ENCODE measurements at regions of chr6 and their contacts with region 1.

Region 1: DNA sequence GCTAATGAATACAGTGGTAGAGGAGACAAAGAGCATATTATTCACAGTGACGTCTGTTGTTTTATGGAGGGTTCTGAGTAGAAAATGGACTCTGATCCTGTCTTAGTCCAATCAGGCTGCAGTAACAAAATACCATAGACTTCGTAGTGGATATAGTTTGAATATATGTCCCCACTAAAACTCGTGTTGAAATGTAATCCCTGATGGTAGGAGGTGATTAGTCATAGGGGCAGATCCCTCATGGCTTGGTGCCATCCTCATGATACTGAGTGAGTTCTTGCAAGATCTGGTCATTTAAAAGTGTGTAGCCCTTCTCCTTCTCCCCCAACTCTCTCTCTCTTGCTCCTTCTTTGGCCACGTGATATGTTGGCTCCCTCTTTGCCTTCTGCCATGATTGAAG is 82.5 kb downstream of the CD83 start:
- DNase-seq: no peak
- H3K4me3 ChIP-seq: no peak overlapping the region
- H3K27ac ChIP-seq: no peak overlapping the region
- H3K4me1 ChIP-seq: no peaks in the 10 kb centered on the region
- CTCF ChIP-seq: no peak

Region 2: DNA sequence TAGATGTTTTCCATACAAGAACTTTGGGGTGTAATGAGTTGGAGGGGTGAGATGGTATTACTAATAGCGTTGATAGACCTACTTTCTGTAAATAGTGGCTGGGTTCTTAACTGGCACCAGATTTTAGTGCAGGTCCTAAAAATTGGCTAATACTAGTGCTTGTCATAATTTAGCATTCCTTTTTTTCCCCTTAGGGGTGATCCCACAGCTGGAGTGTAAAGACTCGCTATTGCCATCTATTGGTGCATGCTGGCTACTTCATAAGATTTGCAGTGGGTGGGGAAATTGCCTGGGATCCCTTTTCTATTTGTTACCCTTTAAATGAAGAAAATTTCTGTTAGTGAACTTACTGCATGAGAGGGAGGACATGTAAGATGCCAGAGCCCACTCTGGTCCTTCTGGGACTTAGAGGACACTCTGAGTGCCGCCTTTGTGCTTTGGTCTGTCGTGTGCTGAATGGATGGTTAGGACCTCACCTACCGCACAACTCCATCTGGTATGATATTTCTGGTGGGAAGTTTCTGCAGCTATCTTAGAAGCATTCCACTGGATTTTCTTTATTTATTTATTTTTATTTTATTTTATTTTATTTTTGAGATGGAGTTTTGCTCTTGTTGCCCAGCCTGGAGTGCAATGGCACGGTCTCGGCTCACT is 1241.3 kb after region 1 on chr6:
- CTCF ChIA-PET with region 1: no interaction called
- POLR2A ChIA-PET with region 1: no interaction called
- intact Hi-C with region 1: loop called (anchors 10 kb)
- DNase-seq: peak; percentile 59
- H3K4me3 ChIP-seq: no peak overlapping the region
- H3K27ac ChIP-seq: no peak overlapping the region
- H3K4me1 ChIP-seq: peaks cover 11% of the 10 kb centered on the region
- CTCF ChIP-seq: peak; percentile 89

Measured in OCI-LY7 (cell line).